HCT116 (cell line): ENCODE measurements at regions of chr1 and their contacts with region 1.

Region 1: DNA sequence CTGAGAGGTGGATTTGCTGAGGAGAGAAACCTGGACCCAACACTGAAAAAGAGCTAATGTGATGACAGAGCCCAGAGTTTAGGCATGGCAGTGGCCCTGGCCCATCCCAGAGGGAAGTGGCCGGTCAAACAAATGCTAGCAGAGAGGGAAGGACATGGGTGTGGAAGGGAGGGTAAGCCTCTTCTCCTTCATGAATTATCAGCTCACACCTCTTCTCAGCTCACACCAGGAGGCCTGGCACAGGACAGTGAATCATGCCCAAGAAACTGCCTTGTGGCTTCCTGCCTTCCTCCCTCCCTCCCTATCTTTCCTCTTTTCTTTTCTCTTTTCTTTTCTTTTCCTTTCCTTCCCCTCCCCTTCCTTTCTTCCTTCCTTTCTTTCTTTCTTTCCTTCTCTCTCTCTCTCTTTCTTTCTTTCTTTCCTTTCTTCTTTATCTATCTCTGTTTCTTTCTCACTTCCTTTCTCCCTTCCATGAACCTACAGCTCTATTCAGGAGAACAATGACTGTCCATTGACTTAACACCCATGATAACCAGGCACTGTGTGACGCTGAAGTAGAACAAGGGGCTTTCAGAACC is 1.2 kb upstream of the SPRR3 start:
- DNase-seq: no peak
- ATAC-seq: no peak
- H3K4me3 ChIP-seq: no peak overlapping the region
- H3K27ac ChIP-seq: no peak overlapping the region
- H3K4me1 ChIP-seq: peaks cover 0 to 10% of the 10 kb centered on the region in 2 experiments; a peak in 1 of 4 replicates
- H3K27me3 ChIP-seq: peaks cover 23% of the 10 kb centered on the region; the same call in 1 of the 2 replicates
- CTCF ChIP-seq: no peak
- POLR2A ChIP-seq: no peak
- RAD21 ChIP-seq: no peak

Region 2: DNA sequence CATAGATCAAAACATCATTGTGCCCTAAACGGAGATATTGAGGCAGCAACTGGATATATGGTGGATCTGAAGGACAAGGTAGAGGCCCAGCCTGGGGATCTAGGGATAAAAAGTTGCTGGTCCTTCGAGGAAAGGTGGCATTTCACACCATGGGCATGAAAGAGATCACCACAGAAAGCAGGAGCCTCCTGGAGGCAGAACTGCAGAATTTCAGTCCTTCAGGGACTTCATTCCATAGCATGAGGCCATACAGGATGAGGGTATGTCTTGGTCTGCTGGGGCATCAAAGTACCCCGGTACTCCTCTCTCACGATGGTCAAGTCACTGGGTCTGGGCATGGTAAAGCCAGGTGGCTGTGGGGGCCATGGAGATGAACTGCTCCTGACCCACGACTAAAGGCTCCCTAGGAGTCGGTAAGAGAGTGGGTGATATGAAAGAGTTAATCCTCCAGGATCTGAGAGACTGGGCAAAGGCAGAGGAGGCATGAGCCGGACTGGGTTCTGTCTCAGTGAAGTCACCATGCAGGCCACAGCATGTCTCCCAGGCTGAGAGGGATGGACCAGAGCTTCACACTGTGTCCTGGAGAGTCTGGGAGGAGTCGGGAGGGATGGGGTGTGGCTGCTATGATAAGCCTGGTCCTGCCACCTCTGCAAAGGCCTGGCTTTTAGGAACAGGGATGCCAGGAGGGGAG is 59.2 kb before region 1 on chr1:
- CTCF ChIA-PET with region 1: no interaction called
- POLR2A ChIA-PET with region 1: no interaction called
- RAD21 ChIA-PET with region 1: interaction called in 1 of 2 experiments, 12 read pairs
- intact Hi-C with region 1: no loop called
- DNase-seq: no peak
- ATAC-seq: peak; percentile 70
- H3K4me3 ChIP-seq: no peak overlapping the region
- H3K27ac ChIP-seq: no peak overlapping the region
- H3K4me1 ChIP-seq: no peaks in the 10 kb centered on the region
- H3K27me3 ChIP-seq: peaks cover 4% of the 10 kb centered on the region; the same call in 1 of the 2 replicates
- CTCF ChIP-seq: peak in 2 of 3 experiments; percentile 22 to 41; a peak in 2 of 6 replicates
- POLR2A ChIP-seq: no peak
- RAD21 ChIP-seq: no peak